Breast epithelium (tissue), 4 donors: ENCODE measurements at regions of chr20 and their contacts with region 1.

Region 1: DNA sequence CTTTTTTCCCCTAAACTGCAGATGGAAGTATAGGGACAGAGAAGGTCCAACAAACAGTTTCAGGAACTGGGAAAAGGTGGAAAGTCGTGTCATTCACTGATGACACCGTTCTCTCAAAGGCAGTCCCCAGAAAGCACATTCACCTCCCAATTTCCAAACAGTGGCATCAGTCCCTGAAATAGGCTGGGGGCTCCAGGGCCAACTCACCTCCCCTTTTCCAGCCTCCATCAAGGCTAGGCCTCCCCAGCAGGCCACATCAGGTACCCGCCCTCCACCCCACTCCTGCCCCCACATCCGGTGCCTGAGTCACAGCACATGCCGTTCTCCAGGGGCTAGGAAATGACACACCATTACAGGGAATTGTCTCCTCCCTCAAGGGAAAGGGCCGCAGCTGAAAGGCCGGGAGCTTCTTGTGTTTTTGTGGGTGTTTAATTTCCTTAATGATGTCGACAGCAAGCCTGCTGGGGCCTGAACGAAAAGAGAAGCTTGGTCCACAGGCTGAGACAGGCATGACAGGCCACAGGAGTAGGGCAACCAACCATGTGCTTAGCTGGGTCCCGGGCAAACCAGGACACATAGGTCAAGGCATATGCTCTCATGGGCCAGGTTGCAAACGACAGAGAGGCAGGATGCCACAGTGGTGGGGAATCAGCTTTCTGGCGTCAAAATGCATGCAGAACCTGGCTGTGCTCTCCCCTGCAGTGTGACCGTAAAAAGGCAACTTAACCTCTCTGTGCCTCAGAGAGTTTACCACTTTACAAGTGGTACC is 39.2 kb downstream of the ZMYND8 start:
- DNase-seq: peak; percentile 65 to 89
- H3K4me3 ChIP-seq: peak overlapping the region in 2 of 3 donors; percentile 33 to 57
- H3K27ac ChIP-seq: peak overlapping the region; percentile 99 to 100
- H3K4me1 ChIP-seq: peaks cover 29 to 54% of the 10 kb centered on the region in 2 donors
- H3K27me3 ChIP-seq: no peaks in the 10 kb centered on the region
- CTCF ChIP-seq: peak in 1 of 3 donors; percentile 24
- POLR2A ChIP-seq: no peak

Region 2: GRCh38 chr20:47356526-47357295 is 39.4 kb after region 1 on chr20 and contains the start of gene ZMYND8:
- intact Hi-C with region 1: loop called (anchors 5 kb)
- DNase-seq: peak; percentile 88 to 89
- H3K4me3 ChIP-seq: peak within 1 kb of the TSS in 2 of 3 donors; percentile 30 to 55
- H3K27ac ChIP-seq: peak within 1 kb of the TSS; percentile 99 to 100
- H3K4me1 ChIP-seq: peaks cover 42 to 82% of the 10 kb centered on the region in 2 donors
- H3K27me3 ChIP-seq: no peaks in the 10 kb centered on the region
- CTCF ChIP-seq: no peak
- POLR2A ChIP-seq: no peak
- total RNA-seq, gene ZMYND8: 40.6 to 47.7 (median 41.4) TPM